Aorta (tissue), 5 donors: ENCODE measurements at regions of chr2 and their contacts with region 1.

Region 1: DNA sequence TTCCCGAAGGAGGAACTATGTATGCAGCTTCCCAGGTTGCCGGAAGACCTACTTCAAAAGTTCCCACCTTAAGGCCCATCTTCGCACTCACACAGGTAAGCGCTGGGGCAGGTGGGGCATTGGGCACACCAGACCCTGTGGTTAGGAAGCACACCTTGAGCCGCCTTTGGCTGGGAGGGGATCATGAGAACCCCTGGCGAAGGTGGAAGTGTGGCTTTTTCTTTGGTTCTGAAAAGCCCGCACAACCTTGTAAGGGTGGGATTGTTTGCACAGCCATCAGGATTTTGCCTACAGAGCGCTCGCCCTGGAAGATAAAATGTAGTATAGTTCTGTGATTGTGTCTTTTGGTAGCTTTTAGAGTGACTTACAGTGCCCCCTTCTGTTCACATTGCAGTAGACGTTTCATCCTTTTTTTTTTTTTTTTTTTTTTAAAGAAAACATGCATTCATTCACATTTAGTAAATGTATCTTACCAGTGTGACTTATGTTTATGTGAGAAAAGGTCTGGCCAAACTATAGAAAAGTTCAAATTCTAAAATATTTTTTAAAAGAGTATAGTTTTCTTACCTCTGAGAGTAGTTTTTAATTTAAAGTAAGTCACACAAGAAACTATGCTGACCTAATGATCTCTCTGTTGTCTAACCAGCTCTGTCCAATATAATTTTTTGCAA is 5.3 kb downstream of the KLF11 start:
- DNase-seq: peak; percentile 40 to 61
- ATAC-seq: no peak
- H3K4me3 ChIP-seq: no peak overlapping the region
- H3K27ac ChIP-seq: no peak overlapping the region
- H3K4me1 ChIP-seq: no peaks in the 10 kb centered on the region
- H3K27me3 ChIP-seq: no peaks in the 10 kb centered on the region

Region 2: GRCh38 chr2:9770308-9771100 is 278.1 kb before region 1 on chr2:
- intact Hi-C with region 1: no loop called
- DNase-seq: no peak
- ATAC-seq: peak; percentile 50
- H3K4me3 ChIP-seq: no peak overlapping the region
- H3K27ac ChIP-seq: no peak overlapping the region
- H3K4me1 ChIP-seq: no peaks in the 10 kb centered on the region
- H3K27me3 ChIP-seq: no peaks in the 10 kb centered on the region

Region 3: DNA sequence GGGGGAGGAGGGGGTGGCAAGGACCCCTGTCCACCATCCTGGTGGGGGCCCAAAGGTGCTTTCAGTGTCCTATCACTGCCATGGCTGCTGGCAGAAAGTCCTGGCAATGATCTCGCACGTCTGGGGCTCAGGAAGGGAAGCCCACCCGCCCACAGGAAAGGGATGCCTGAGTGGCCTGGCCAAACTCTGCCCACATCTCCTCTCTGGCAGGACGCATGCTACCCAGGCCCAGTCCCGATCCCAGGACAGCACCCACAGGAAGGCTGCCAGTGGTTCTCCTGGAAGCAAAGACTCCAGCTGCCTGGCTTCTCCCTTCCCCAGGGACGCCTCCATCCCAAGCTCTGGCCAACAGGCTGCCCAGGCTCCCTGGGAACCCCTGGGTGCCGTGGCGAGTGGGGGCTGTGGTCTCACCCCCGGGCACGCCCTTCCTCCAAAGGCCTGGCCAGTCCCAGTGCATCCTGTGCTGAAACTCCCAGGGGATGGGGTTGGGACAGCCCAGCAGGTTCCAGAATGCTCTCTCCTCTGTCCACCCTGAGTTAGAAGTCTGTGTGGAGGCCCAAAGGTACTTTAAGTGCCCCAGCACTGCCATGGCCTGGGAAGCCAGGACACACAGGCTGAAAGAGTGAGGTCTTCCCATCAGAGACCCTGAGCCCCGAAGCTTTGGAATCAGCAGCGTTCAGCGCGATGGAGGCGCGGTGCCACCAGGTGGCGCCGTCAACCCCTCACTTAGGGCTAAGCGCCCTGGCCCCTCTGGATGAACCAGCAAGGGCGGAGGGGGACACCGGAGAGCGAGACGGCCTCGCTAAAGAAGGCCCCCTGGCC is 235.1 kb before region 1 on chr2:
- intact Hi-C with region 1: loop called (anchors 1 to 5 kb)
- DNase-seq: peak; percentile 78 to 93
- ATAC-seq: peak; percentile 87
- H3K4me3 ChIP-seq: no peak overlapping the region
- H3K27ac ChIP-seq: no peak overlapping the region
- H3K4me1 ChIP-seq: no peaks in the 10 kb centered on the region
- H3K27me3 ChIP-seq: no peaks in the 10 kb centered on the region

Region 4: GRCh38 chr2:9984217-9984739 is 64.4 kb before region 1 on chr2:
- intact Hi-C with region 1: loop called (anchors 2 to 5 kb)
- DNase-seq: no peak
- ATAC-seq: peak; percentile 87
- H3K4me3 ChIP-seq: no peak overlapping the region
- H3K27ac ChIP-seq: peak overlapping the region; percentile 5 to 18
- H3K4me1 ChIP-seq: peaks cover 0 to 3% of the 10 kb centered on the region in 2 donors
- H3K27me3 ChIP-seq: no peaks in the 10 kb centered on the region